Activated CD4-positive, alpha-beta T cell treated with anti-CD3 and anti-CD28 coated beads, Interleukin-2, amount 10 ng/mL, durations not matched to agents 24 days and 14 days (primary cell): ENCODE measurements at regions of chr9 and their contacts with region 1.

Region 1: GRCh38 chr9:129641746-129642513 is at the start of gene ASB6:
- DNase-seq: peak; percentile 99
- H3K4me3 Mint-ChIP-seq: peak within 1 kb of the TSS; percentile 90
- H3K27ac Mint-ChIP-seq: peak within 1 kb of the TSS; percentile 88
- H3K4me1 Mint-ChIP-seq: peaks cover 16% of the 10 kb centered on the region
- H3K27me3 Mint-ChIP-seq: no peaks in the 10 kb centered on the region
- total RNA-seq, gene ASB6: 21.9 and 22.7 TPM in 2 replicates

Region 2: GRCh38 chr9:129602598-129603415 is 39.1 kb before region 1 on chr9:
- intact Hi-C with region 1: no loop called
- DNase-seq: no peak
- H3K4me3 Mint-ChIP-seq: peak overlapping the region; percentile 21
- H3K27ac Mint-ChIP-seq: peak overlapping the region; percentile 58
- H3K4me1 Mint-ChIP-seq: peaks cover 49% of the 10 kb centered on the region
- H3K27me3 Mint-ChIP-seq: no peaks in the 10 kb centered on the region

Region 3: GRCh38 chr9:129613520-129614175 is 28.3 kb before region 1 on chr9:
- intact Hi-C with region 1: no loop called
- DNase-seq: no peak
- H3K4me3 Mint-ChIP-seq: no peak overlapping the region
- H3K27ac Mint-ChIP-seq: no peak overlapping the region
- H3K4me1 Mint-ChIP-seq: peaks cover 15% of the 10 kb centered on the region
- H3K27me3 Mint-ChIP-seq: peaks cover 19% of the 10 kb centered on the region

Region 4: GRCh38 chr9:129626079-129626624 is 15.8 kb before region 1 on chr9 and contains the start of gene NTMT1:
- intact Hi-C with region 1: loop called (anchors 2 kb)
- DNase-seq: peak; percentile 97
- H3K4me3 Mint-ChIP-seq: peak within 1 kb of the TSS; percentile 83
- H3K27ac Mint-ChIP-seq: peak within 1 kb of the TSS; percentile 93
- H3K4me1 Mint-ChIP-seq: peaks cover 33% of the 10 kb centered on the region
- H3K27me3 Mint-ChIP-seq: peaks cover 8% of the 10 kb centered on the region
- total RNA-seq, gene NTMT1: 72.0 and 72.4 TPM in 2 replicates

Region 5: GRCh38 chr9:129726322-129727160 is 84.6 kb after region 1 on chr9:
- intact Hi-C with region 1: loop called (anchors 5 kb)
- DNase-seq: peak; percentile 90
- H3K4me3 Mint-ChIP-seq: peak overlapping the region; percentile 52
- H3K27ac Mint-ChIP-seq: no peak overlapping the region
- H3K4me1 Mint-ChIP-seq: peaks cover 4% of the 10 kb centered on the region
- H3K27me3 Mint-ChIP-seq: peaks cover 10% of the 10 kb centered on the region

Region 6: GRCh38 chr9:129752915-129753729 is 111.2 kb after region 1 on chr9 and contains the start of gene PTGES:
- intact Hi-C with region 1: no loop called
- DNase-seq: peak; percentile 89
- H3K4me3 Mint-ChIP-seq: peak within 1 kb of the TSS; percentile 37
- H3K27ac Mint-ChIP-seq: no peak within 1 kb of the TSS
- H3K4me1 Mint-ChIP-seq: peaks cover 18% of the 10 kb centered on the region
- H3K27me3 Mint-ChIP-seq: peaks cover 12% of the 10 kb centered on the region
- total RNA-seq, gene PTGES: 0.09 and 0.12 TPM in 2 replicates

Region 7: DNA sequence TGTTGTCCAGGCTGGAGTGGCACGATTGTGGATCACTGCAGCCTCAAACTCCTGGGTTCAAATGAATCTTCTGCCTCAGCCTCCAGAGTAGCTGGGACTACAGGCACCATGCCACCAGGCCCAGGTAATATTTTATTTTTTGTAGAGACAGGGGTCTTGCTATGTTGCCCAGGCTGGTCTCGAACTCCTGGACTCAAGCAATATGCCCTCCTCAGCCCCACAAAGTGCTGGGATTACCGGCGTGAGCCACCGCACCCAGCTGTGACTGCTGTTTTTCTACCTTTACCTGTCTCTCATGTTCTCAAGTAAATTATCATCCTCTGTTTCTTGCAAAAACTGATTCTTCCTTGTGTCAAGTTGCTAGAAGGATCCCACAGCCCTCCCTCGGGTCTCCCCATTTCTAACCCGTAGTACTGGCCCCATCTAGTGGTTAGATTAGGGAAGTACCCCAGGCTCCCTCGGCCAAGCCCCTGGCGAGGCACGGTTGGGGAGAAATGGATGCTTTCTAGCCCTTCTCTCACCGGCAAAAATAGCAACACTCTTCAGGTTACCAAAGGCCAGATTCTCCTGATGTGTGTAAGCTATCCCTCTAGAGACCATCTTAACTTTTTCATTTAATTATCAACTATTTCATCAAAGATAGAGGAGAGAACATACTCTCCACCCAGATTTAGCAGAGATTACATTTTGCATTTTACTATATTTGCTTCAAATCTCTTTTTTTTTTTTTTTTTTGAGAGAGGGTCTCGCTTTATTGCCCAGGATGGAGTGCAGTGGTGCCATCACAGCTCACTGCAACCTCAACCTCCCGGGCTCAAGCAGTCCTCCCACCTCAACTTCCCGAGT is 141.8 kb after region 1 on chr9:
- intact Hi-C with region 1: loop called (anchors 2 kb)
- DNase-seq: peak; percentile 94
- H3K4me3 Mint-ChIP-seq: no peak overlapping the region
- H3K27ac Mint-ChIP-seq: no peak overlapping the region
- H3K4me1 Mint-ChIP-seq: peaks cover 4% of the 10 kb centered on the region
- H3K27me3 Mint-ChIP-seq: peaks cover 24% of the 10 kb centered on the region